MCF 10A (cell line): ENCODE measurements at regions of chr10 and their contacts with region 1.

Region 1: DNA sequence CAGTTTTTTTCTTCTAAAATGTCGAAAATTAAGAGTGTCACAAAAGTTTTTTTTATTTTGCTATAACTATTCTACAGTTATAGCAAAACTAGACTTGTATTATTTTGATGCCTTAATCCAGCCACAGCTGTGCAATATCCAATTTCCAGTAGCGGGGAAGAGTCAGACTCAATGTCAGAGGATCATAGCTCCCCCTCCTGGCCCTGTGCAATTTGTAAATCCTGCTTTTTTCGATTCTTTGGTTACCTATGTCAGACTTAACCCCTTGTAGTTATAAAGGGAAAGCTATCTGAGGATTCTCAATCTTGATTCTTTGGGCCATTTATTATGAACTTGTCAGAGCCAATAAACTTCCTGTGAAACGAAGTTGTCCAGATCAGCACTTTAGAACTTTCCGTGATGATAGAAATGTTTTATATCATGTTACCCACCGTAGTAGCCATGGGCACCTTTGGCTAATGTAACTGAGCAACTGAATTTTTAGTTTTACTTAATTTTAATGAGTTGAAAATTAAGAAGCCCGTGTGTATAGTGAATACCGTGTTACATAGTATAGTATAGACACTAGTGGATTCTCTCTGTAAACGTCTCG is 87.7 kb upstream of the PRKCQ start:
- DNase-seq: peak; percentile 61
- H3K4me3 Mint-ChIP-seq: no peak overlapping the region
- H3K27ac Mint-ChIP-seq: no peak overlapping the region
- H3K4me1 Mint-ChIP-seq: no peaks in the 10 kb centered on the region
- H3K27me3 Mint-ChIP-seq: no peaks in the 10 kb centered on the region
- CTCF ChIP-seq: peak; percentile 74

Region 2: DNA sequence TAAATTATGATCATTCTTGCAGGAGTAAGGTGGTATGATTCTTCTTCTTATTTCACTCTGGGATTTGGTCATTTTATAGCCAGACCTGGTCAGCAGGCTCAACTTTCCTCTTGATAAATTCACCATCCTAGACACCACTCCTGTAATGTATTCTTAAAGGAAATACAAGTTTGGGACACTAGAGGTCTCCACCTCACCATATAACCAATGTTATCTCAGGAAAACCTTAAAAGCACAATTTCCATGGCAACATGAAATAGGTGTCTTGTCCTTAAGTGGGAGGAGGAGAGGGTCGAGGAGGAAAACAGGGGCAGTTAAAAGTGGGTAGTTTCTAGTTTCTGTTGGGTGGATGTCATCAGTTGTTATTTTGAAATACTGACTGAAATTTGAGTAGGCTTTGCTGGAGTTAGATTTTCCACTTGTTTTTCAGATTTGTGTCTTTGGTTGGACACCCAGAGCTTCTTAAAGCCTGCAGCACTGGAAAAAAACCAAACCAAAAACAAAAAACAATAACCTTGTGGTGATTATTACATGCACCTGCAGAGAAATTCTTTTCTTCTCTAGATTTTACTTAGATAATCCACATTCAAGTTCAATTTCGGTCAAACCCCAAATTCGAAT is 250.8 kb before region 1 on chr10:
- CTCF ChIA-PET with region 1: interaction called, 54 read pairs
- POLR2A ChIA-PET with region 1: interaction called, 8 read pairs
- intact Hi-C with region 1: loop called (anchors 1 kb)
- DNase-seq: peak; percentile 58
- H3K4me3 Mint-ChIP-seq: no peak overlapping the region
- H3K27ac Mint-ChIP-seq: no peak overlapping the region
- H3K4me1 Mint-ChIP-seq: no peaks in the 10 kb centered on the region
- H3K27me3 Mint-ChIP-seq: peaks cover 14% of the 10 kb centered on the region
- CTCF ChIP-seq: peak; percentile 75

Region 3: GRCh38 chr10:6445501-6446316 is 222.1 kb before region 1 on chr10:
- CTCF ChIA-PET with region 1: interaction called, 57 read pairs
- POLR2A ChIA-PET with region 1: interaction called, 3 read pairs
- intact Hi-C with region 1: loop called (anchors 1 kb)
- DNase-seq: peak; percentile 64
- H3K4me3 Mint-ChIP-seq: no peak overlapping the region
- H3K27ac Mint-ChIP-seq: no peak overlapping the region
- H3K4me1 Mint-ChIP-seq: no peaks in the 10 kb centered on the region
- H3K27me3 Mint-ChIP-seq: no peaks in the 10 kb centered on the region
- CTCF ChIP-seq: peak; percentile 55

Region 4: GRCh38 chr10:6678211-6678803 is 10.5 kb after region 1 on chr10:
- CTCF ChIA-PET with region 1: interaction called, 11 read pairs
- POLR2A ChIA-PET with region 1: no interaction called
- intact Hi-C with region 1: no loop called
- DNase-seq: peak; percentile 52
- H3K4me3 Mint-ChIP-seq: no peak overlapping the region
- H3K27ac Mint-ChIP-seq: no peak overlapping the region
- H3K4me1 Mint-ChIP-seq: peaks cover 9% of the 10 kb centered on the region
- H3K27me3 Mint-ChIP-seq: no peaks in the 10 kb centered on the region
- CTCF ChIP-seq: peak; percentile 31

Region 5: GRCh38 chr10:6746782-6747181 is 79.0 kb after region 1 on chr10:
- CTCF ChIA-PET with region 1: no interaction called
- POLR2A ChIA-PET with region 1: no interaction called
- intact Hi-C with region 1: no loop called
- DNase-seq: no peak
- H3K4me3 Mint-ChIP-seq: no peak overlapping the region
- H3K27ac Mint-ChIP-seq: no peak overlapping the region
- H3K4me1 Mint-ChIP-seq: peaks cover 49% of the 10 kb centered on the region
- H3K27me3 Mint-ChIP-seq: no peaks in the 10 kb centered on the region
- CTCF ChIP-seq: no peak

Region 6: DNA sequence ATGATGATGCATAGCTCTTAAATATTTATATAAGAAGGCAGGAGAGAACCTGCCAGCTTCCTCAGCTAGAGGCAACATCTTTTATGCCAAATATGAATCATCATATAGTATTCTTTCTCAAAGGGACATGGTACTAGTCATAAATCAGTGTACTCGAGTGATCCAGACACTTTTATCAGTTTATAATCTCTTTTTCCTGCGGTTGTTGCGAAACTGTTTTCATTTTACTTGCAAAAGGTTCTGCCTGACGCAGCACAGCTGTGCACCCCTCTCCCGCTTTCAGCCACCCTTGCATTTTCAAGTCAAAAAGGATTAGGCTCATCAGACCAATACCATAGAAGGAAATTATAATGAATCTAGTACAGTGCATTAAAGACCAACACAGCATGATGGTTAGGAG is 244.6 kb after region 1 on chr10:
- CTCF ChIA-PET with region 1: no interaction called
- POLR2A ChIA-PET with region 1: interaction called, 3 read pairs
- intact Hi-C with region 1: loop called (anchors 1 kb)
- DNase-seq: peak; percentile 89
- H3K4me3 Mint-ChIP-seq: no peak overlapping the region
- H3K27ac Mint-ChIP-seq: no peak overlapping the region
- H3K4me1 Mint-ChIP-seq: peaks cover 5% of the 10 kb centered on the region
- H3K27me3 Mint-ChIP-seq: no peaks in the 10 kb centered on the region
- CTCF ChIP-seq: no peak

Region 7: DNA sequence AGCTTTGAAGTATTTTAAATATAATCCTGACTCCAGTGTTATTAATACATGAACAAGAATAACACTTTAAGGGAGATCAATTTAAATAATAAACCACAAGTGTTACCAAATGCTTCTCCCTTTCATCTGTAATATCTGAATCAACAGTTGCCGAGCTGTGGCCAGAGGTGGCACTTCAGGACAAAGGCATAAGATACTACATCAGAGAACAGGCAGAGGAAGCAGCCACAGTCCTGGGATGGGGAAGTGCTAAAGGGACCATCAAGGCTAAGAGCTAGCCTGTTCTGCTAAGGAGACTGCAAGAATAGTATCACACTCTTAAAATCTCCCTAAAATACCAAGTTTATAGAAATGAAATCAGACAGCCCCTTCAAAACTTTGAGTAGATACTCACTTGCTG is 290.5 kb after region 1 on chr10:
- CTCF ChIA-PET with region 1: no interaction called
- POLR2A ChIA-PET with region 1: no interaction called
- intact Hi-C with region 1: no loop called
- DNase-seq: no peak
- H3K4me3 Mint-ChIP-seq: no peak overlapping the region
- H3K27ac Mint-ChIP-seq: no peak overlapping the region
- H3K4me1 Mint-ChIP-seq: no peaks in the 10 kb centered on the region
- H3K27me3 Mint-ChIP-seq: no peaks in the 10 kb centered on the region
- CTCF ChIP-seq: no peak

Region 8: DNA sequence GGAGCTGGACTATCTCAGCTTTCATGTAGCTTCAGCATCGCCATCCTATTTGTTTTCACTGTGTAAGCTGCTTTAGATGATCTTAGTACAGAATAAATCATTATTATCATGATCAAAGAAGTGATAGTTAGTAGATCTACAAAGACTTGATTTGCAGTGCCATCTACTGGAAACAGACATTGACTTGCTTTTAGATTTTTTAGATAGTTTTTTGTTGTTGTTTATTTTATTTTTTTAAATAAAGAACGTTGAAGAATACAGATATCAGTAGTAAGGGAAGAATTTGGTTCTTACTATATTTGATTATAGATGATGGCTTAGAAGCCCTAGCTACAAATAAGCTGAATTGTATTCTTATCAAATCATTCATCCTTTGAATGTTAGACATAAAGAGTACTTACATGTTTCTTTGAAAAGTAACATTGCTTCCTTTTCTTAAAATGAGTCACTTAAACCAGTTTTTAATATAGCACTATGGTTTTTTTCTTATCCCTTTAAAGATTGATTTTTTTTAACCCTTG is 749.4 kb after region 1 on chr10:
- CTCF ChIA-PET with region 1: interaction called, 67 read pairs
- POLR2A ChIA-PET with region 1: interaction called, 8 read pairs
- intact Hi-C with region 1: loop called (anchors 1 kb)
- DNase-seq: peak; percentile 55
- H3K4me3 Mint-ChIP-seq: no peak overlapping the region
- H3K27ac Mint-ChIP-seq: no peak overlapping the region
- H3K4me1 Mint-ChIP-seq: no peaks in the 10 kb centered on the region
- H3K27me3 Mint-ChIP-seq: peaks cover 28% of the 10 kb centered on the region
- CTCF ChIP-seq: peak; percentile 65